ENCODE measurements at regions of chr14 and their contacts with region 1.

Region 1: GRCh38 chr14:67166450-67166853 is 22.8 kb upstream of the GARIN2 start:
- H3K4me3 Mint-ChIP-seq: no peak overlapping the region
- H3K27ac Mint-ChIP-seq: no peak overlapping the region
- H3K4me1 Mint-ChIP-seq: no peaks in the 10 kb centered on the region
- H3K27me3 Mint-ChIP-seq: no peaks in the 10 kb centered on the region

Region 2: GRCh38 chr14:66638689-66639088 is 527.8 kb before region 1 on chr14:
- intact Hi-C with region 1: no loop called
- H3K4me3 Mint-ChIP-seq: no peak overlapping the region
- H3K27ac Mint-ChIP-seq: no peak overlapping the region
- H3K4me1 Mint-ChIP-seq: no peaks in the 10 kb centered on the region
- H3K27me3 Mint-ChIP-seq: no peaks in the 10 kb centered on the region

Region 3: DNA sequence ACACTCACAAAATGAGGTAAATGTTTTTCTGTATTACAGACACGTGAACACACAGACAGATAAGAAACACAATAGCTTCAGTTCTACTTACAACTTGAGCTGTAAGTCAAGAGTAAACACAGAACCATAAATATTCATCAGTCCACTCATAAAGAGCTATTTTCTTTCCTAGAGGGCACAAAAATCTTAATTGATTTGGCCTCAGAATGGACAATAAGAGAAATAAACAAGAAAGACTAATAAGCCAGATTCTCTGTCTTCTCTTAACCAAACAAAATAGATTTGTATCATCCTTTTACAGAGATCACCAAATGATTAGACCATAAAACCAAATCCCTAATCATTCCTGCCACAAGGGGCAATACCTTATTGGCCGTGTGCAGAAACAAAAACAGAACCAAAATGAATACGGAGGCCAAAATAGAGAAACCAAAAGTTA is 15.3 kb before region 1 on chr14:
- intact Hi-C with region 1: no loop called
- H3K4me3 Mint-ChIP-seq: no peak overlapping the region
- H3K27ac Mint-ChIP-seq: no peak overlapping the region
- H3K4me1 Mint-ChIP-seq: no peaks in the 10 kb centered on the region
- H3K27me3 Mint-ChIP-seq: no peaks in the 10 kb centered on the region

Region 4: DNA sequence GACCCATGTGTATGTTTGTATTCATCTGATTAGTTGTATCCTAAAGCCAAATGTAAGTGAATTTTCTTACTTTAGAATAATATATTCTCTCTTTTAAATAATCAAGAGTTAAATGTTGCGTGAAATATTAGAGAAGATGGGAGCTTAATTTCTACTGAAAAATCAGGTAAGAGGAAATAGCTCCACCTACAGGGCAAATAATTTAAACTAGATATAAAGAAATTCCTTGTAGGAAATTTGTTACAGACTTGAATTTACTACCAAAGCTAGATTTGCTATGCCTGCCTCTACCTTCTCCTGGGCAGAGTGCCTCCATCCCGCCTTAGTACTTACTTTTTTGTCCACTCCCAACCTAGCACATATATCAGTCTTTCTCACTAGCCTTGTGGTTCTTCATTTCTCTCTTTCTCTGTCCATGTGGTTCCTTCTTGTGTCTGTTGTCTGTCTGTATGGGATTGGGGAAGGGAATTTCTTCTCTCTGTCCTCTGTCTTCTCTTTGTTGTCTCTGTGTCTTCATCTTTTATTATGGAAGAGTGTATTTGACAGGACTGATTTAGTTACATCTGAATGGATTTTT is 119.5 kb after region 1 on chr14:
- intact Hi-C with region 1: loop called (anchors 1 kb)
- H3K4me3 Mint-ChIP-seq: no peak overlapping the region
- H3K27ac Mint-ChIP-seq: no peak overlapping the region
- H3K4me1 Mint-ChIP-seq: no peaks in the 10 kb centered on the region
- H3K27me3 Mint-ChIP-seq: no peaks in the 10 kb centered on the region